Ascending aorta (tissue), 2 donors: ENCODE measurements at regions of chr10 and their contacts with region 1.

Region 1: DNA sequence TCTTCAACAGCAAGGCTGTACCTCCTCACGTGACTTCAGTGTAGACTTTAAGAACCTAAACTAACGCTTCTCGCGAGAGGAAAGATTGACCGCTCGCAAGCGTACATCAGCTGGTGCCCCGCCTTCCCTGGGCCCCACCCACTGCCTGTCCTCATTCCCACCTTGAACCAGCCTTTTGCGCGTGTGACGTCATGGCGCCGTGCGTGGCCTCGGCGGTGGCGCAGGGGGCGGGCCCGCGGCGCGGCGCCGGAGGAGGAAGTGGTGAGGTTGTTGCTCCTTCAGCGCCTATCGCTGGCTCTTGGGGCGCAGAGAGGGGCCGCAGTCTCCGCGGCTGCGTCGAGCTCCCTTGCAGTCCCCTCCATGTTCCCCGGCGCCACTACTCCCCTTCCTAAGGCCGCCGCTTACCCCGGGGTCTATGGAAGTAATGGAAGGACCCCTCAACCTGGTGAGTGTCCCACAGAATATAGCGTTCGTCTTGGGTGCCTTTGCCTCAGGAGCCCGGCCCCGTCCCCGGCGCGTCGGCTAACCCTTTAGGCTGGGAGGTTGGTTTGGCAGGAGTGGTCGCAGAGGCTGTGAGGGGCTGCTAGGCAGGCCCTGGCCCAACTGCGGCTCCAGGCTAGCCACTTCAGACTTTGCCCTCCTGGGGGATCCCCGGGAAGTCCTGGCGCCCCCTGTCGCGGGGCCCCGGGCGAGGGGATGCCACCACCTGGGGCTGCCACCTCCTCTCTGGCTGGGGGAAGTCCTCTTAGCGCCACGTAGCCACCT is at the start of gene NRBF2:
- DNase-seq: peak; percentile 95 to 99
- H3K4me3 ChIP-seq: peak within 1 kb of the TSS; percentile 97 to 99
- H3K27ac ChIP-seq: peak within 1 kb of the TSS; percentile 95 to 97
- H3K4me1 ChIP-seq: peaks cover 4 to 10% of the 10 kb centered on the region in 2 donors
- H3K27me3 ChIP-seq: no peaks in the 10 kb centered on the region
- CTCF ChIP-seq: peak in 1 of 3 experiments; percentile 21
- total RNA-seq, gene NRBF2: 4.2 TPM

Region 2: DNA sequence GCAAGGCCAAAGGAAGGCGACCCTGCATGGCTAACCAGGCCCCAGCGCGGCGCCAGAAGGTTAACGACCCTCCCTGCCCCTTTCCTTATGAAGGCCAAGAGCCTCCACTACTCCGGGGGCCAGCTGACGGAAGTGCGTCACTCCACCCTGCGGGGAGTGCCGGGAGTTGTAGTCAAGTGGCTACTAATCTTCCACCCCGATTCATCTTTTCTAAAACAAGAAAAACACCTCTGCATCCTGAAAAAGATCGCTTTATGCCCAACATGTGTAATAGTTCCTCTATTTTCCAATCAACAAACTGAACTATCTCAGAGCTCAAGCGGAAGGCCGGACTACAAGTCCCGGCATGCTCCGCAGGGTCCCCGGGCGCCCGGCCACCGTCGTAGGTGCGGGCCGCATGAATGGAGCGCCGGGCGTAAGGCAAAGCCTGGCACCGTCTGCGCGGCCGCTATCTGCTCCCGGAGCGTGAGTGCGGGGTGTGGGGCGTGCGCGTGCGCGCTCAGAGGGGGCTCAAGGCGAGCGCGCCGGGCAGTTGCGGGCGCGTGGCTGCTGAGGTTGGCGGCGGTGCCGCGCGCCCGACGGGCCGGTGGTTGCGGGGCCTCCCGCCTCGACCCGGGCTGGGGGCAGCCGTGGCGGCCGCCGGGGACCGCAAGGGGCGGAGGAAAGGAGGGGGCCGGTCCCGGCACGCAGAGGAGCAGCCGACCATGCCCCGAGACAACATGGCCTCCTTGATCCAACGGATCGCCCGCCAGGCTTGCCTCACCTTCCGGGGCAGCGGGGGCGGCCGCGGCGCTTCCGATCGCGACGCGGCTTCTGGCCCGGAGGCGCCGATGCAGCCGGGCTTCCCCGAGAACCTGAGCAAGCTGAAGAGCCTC is 328.6 kb before region 1 on chr10 and contains the start of gene ADO:
- intact Hi-C with region 1: loop called (anchors 5 kb)
- DNase-seq: peak in 1 of 2 donors; percentile 88
- H3K4me3 ChIP-seq: peak within 1 kb of the TSS; percentile 69 to 97
- H3K27ac ChIP-seq: peak within 1 kb of the TSS; percentile 95 to 97
- H3K4me1 ChIP-seq: peaks cover 0 to 24% of the 10 kb centered on the region in 2 donors
- H3K27me3 ChIP-seq: no peaks in the 10 kb centered on the region
- CTCF ChIP-seq: no peak
- total RNA-seq, gene ADO: 22.1 TPM

Region 3: DNA sequence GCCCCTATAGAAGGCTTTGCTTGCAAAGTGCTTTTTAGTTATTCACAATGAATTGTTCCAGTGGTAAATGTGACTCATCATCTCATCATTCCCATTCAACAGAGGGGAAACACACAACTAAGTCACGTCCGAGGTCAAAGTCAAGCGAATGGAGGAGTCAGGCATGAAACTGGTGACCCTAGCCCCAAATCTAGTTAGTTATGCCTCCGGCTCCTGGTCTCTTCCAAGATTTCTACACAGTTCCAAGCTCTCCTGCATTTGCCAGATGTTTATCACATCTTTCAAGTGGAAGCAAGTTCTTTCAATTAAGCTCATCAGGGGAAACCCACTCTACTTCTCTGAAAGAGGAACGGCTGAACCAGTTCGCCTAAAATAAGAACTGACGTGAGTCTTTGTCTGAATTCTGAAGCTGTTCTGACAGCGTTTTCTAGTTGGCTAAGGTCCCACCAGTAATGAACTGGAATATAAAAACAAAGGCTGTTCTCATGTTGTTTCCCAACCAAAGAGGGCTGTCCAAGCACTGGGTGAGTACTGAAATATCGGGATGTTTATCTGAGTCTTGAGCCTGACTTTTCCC is 141.0 kb before region 1 on chr10:
- intact Hi-C with region 1: no loop called
- DNase-seq: no peak
- H3K4me3 ChIP-seq: no peak overlapping the region
- H3K27ac ChIP-seq: no peak overlapping the region
- H3K4me1 ChIP-seq: no peaks in the 10 kb centered on the region
- H3K27me3 ChIP-seq: no peaks in the 10 kb centered on the region
- CTCF ChIP-seq: no peak